Head of caudate nucleus (tissue), 42 donors: ENCODE measurements at regions of chr7 and their contacts with region 1.

Region 1: GRCh38 chr7:134140889-134141867 is 14.0 kb downstream of the LRGUK start:
- DNase-seq: peak; percentile 22 to 93 (median 79)

Region 2: GRCh38 chr7:134293002-134293740 is 152.0 kb after region 1 on chr7:
- intact Hi-C with region 1: loop called (anchors 10 kb)
- DNase-seq: peak in 21 of 42 donors; percentile 2 to 63 (median 30)